ENCODE measurements at regions of chr11 and their contacts with region 1.

Region 1: GRCh38 chr11:111938687-111939160 is 1.6 kb downstream of the DIXDC1 start:
- DNase-seq: peak; percentile 64
- H3K4me3 ChIP-seq: peak overlapping the region in 2 of 3 experiments; percentile 4 to 6
- H3K27ac ChIP-seq: peak overlapping the region; percentile 94
- H3K4me1 ChIP-seq: peaks cover 45% of the 10 kb centered on the region
- H3K27me3 ChIP-seq: no peaks in the 10 kb centered on the region
- CTCF ChIP-seq: no peak
- POLR2A ChIP-seq: no peak

Region 2: GRCh38 chr11:111586388-111586831 is 352.3 kb before region 1 on chr11:
- CTCF ChIA-PET with region 1: no interaction called
- POLR2A ChIA-PET with region 1: interaction called, 10 read pairs
- dilution Hi-C with region 1: no loop called
- intact Hi-C with region 1: no loop called
- DNase-seq: peak; percentile 59
- H3K4me3 ChIP-seq: no peak overlapping the region
- H3K27ac ChIP-seq: no peak overlapping the region
- H3K4me1 ChIP-seq: peaks cover 8% of the 10 kb centered on the region
- H3K27me3 ChIP-seq: peaks cover 0 to 2% of the 10 kb centered on the region in 2 experiments
- CTCF ChIP-seq: peak; percentile 38 to 49
- POLR2A ChIP-seq: no peak

Region 3: GRCh38 chr11:111745719-111746504 is 192.8 kb before region 1 on chr11:
- CTCF ChIA-PET with region 1: no interaction called
- POLR2A ChIA-PET with region 1: no interaction called
- dilution Hi-C with region 1: no loop called
- intact Hi-C with region 1: no loop called
- DNase-seq: no peak
- H3K4me3 ChIP-seq: no peak overlapping the region
- H3K27ac ChIP-seq: peak overlapping the region; percentile 21
- H3K4me1 ChIP-seq: peaks cover 9% of the 10 kb centered on the region
- H3K27me3 ChIP-seq: no peaks in the 10 kb centered on the region
- CTCF ChIP-seq: no peak
- POLR2A ChIP-seq: no peak

Region 4: GRCh38 chr11:111829185-111829968 is 109.3 kb before region 1 on chr11:
- CTCF ChIA-PET with region 1: no interaction called
- POLR2A ChIA-PET with region 1: no interaction called
- dilution Hi-C with region 1: no loop called
- intact Hi-C with region 1: no loop called
- DNase-seq: no peak
- H3K4me3 ChIP-seq: no peak overlapping the region
- H3K27ac ChIP-seq: no peak overlapping the region
- H3K4me1 ChIP-seq: no peaks in the 10 kb centered on the region
- H3K27me3 ChIP-seq: no peaks in the 10 kb centered on the region
- CTCF ChIP-seq: no peak
- POLR2A ChIP-seq: no peak

Region 5: GRCh38 chr11:111949519-111950426 is 11.0 kb after region 1 on chr11:
- CTCF ChIA-PET with region 1: interaction called, 14 read pairs
- POLR2A ChIA-PET with region 1: no interaction called
- dilution Hi-C with region 1: no loop called
- intact Hi-C with region 1: no loop called
- DNase-seq: peak; percentile 85
- H3K4me3 ChIP-seq: no peak overlapping the region
- H3K27ac ChIP-seq: no peak overlapping the region
- H3K4me1 ChIP-seq: peaks cover 31% of the 10 kb centered on the region
- H3K27me3 ChIP-seq: no peaks in the 10 kb centered on the region
- CTCF ChIP-seq: no peak
- POLR2A ChIP-seq: no peak

Region 6: GRCh38 chr11:111960916-111961315 is 22.2 kb after region 1 on chr11:
- CTCF ChIA-PET with region 1: interaction called, 14 read pairs
- POLR2A ChIA-PET with region 1: no interaction called
- dilution Hi-C with region 1: no loop called
- intact Hi-C with region 1: no loop called
- DNase-seq: no peak
- H3K4me3 ChIP-seq: no peak overlapping the region
- H3K27ac ChIP-seq: no peak overlapping the region
- H3K4me1 ChIP-seq: peaks cover 12% of the 10 kb centered on the region
- H3K27me3 ChIP-seq: no peaks in the 10 kb centered on the region
- CTCF ChIP-seq: no peak
- POLR2A ChIP-seq: no peak